ENCODE measurements at regions of chr15 and their contacts with region 1.

Region 1: GRCh38 chr15:76235186-76235826 is 76.0 kb downstream of the ETFA start:
- DNase-seq: no peak
- ATAC-seq: peak; percentile 51 to 76 (median 63)
- H3K4me3 ChIP-seq: no peak overlapping the region
- H3K27ac ChIP-seq: no peak overlapping the region
- H3K4me1 ChIP-seq: peaks cover 0 to 7% (median 0%) of the 10 kb centered on the region in 9 donors
- H3K27me3 ChIP-seq: no peaks in the 10 kb centered on the region
- CTCF ChIP-seq: peak; percentile 12 to 67 (median 57)

Region 2: DNA sequence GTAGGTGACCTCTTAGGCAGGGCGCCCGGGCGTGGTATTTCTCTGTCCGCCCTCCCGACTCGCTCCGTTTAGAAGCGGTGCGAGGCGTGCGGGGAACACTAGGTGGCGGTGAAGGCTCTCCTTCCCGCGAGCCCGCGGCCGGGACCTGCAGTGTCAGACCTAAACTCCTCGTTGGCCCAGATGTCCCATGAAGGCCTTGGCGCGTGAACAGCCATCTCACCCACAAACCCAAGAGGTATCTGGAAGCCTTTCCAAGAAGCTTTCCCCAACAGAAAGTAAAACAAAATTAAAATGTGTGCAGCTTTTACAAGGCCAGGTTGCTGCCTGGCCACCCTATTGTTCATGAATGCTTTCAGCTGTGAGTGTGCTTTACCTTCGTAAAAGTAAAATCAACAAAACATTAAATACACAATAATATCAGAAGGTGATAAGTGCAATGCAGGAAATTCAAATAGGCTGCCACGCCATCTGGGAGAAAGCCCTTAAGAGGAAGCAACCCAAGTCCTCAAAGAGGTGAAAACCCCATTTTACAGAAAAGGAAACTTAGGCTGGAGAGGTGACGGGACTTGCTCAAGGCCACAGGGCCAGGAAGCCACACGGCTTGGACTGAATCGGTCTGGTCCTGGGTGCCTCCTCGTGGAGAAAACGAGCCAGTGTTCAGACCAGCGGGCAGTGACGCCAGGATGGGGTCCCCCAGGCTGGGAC is 44.3 kb before region 1 on chr15:
- intact Hi-C with region 1: loop called in 1 of 10 experiments (anchors 5 kb)
- DNase-seq: peak; percentile 73 to 81
- ATAC-seq: peak; percentile 75 to 91 (median 84)
- H3K4me3 ChIP-seq: peak overlapping the region in 1 of 10 donors; percentile 5
- H3K27ac ChIP-seq: no peak overlapping the region
- H3K4me1 ChIP-seq: peaks cover 0 to 23% (median 16%) of the 10 kb centered on the region in 9 donors
- H3K27me3 ChIP-seq: peaks cover 0 to 46% (median 34%) of the 10 kb centered on the region in 7 donors
- CTCF ChIP-seq: peak; percentile 53 to 93 (median 87)

Region 3: GRCh38 chr15:76330080-76330680 is 94.9 kb after region 1 on chr15:
- intact Hi-C with region 1: loop called in 9 of 10 experiments (anchors 2 to 10 kb)
- DNase-seq: peak; percentile 38 to 56
- ATAC-seq: peak in 7 of 8 donors; percentile 60 to 77 (median 71)
- H3K4me3 ChIP-seq: no peak overlapping the region
- H3K27ac ChIP-seq: no peak overlapping the region
- H3K4me1 ChIP-seq: peaks cover 0 to 19% (median 5%) of the 10 kb centered on the region in 9 donors
- H3K27me3 ChIP-seq: peaks cover 8 to 78% (median 37%) of the 10 kb centered on the region in 7 donors
- CTCF ChIP-seq: peak; percentile 34 to 71 (median 64)

Region 4: GRCh38 chr15:76336254-76337058 is 101.2 kb after region 1 on chr15 and contains the start of gene ISL2:
- intact Hi-C with region 1: loop called in 6 of 10 experiments (anchors 2 to 10 kb)
- DNase-seq: peak in 1 of 2 donors; percentile 46
- ATAC-seq: peak in 4 of 8 donors; percentile 30 to 57 (median 34)
- H3K4me3 ChIP-seq: peak within 1 kb of the TSS in 9 of 10 donors; percentile 1 to 51 (median 21)
- H3K27ac ChIP-seq: peak within 1 kb of the TSS in 1 of 10 donors; percentile 61
- H3K4me1 ChIP-seq: peaks cover 32 to 66% (median 50%) of the 10 kb centered on the region in 9 donors
- H3K27me3 ChIP-seq: peaks cover 62 to 95% (median 88%) of the 10 kb centered on the region in 7 donors
- CTCF ChIP-seq: no peak
- total RNA-seq, gene ISL2: 0.16 TPM in 1 of 10 donors, not detected in the others

Region 5: DNA sequence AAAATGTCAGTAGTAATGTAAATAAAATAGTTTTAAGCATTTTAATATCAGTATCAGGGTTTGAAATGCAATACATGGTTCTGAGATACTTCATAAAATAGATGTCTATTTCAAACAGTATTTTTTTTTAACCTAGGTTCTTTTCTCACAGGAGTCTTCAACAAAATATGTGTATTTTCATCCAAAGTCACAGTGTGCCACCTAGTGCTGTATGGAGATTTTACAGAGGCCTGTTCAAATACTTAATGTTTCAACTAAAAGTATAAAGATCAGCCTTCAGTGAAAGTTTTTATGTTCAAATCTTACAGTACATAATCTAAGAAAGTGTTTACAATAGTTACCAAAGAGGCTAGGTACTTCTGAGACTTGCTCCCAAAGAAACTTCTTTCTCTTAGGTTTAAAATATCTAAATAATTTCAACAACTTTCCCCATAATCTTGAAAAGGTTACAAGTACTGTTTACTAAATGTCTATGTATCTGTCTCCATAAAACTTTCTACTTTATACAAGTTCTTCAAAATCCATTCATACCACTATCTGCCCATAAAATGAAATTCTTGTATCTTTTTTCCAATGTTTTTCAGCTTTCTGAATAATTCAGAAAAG is 631.5 kb after region 1 on chr15:
- intact Hi-C with region 1: loop called in 1 of 10 experiments (anchors 10 kb)
- DNase-seq: peak in 1 of 2 donors; percentile 9
- ATAC-seq: peak in 6 of 8 donors; percentile 40 to 80 (median 72)
- H3K4me3 ChIP-seq: no peak overlapping the region
- H3K27ac ChIP-seq: peak overlapping the region in 2 of 10 donors; percentile 13 to 14
- H3K4me1 ChIP-seq: peaks cover 0 to 48% (median 23%) of the 10 kb centered on the region in 9 donors
- H3K27me3 ChIP-seq: no peaks in the 10 kb centered on the region
- CTCF ChIP-seq: peak in 8 of 9 donors; percentile 8 to 64 (median 54)